Activated CD4-positive, alpha-beta memory T cell treated with anti-CD3 and anti-CD28 coated beads for 36 hours (primary cell): ENCODE measurements at regions of chr2 and their contacts with region 1.

Region 1: GRCh38 chr2:147331790-147332419 is 512.9 kb upstream of the ACVR2A start:
- DNase-seq: peak; percentile 49
- H3K4me3 Mint-ChIP-seq: no peak overlapping the region
- H3K27ac Mint-ChIP-seq: no peak overlapping the region
- H3K4me1 Mint-ChIP-seq: peaks cover 19% of the 10 kb centered on the region
- H3K27me3 Mint-ChIP-seq: no peaks in the 10 kb centered on the region

Region 2: GRCh38 chr2:146734042-146734820 is 597.7 kb before region 1 on chr2:
- CTCF ChIA-PET with region 1: no interaction called
- POLR2A ChIA-PET with region 1: no interaction called
- intact Hi-C with region 1: loop called (anchors 10 kb)
- DNase-seq: no peak
- H3K4me3 Mint-ChIP-seq: no peak overlapping the region
- H3K27ac Mint-ChIP-seq: no peak overlapping the region
- H3K4me1 Mint-ChIP-seq: no peaks in the 10 kb centered on the region
- H3K27me3 Mint-ChIP-seq: no peaks in the 10 kb centered on the region

Region 3: GRCh38 chr2:147082850-147083522 is 248.9 kb before region 1 on chr2:
- CTCF ChIA-PET with region 1: interaction called, 78 read pairs
- POLR2A ChIA-PET with region 1: no interaction called
- intact Hi-C with region 1: loop called (anchors 1 kb)
- DNase-seq: peak; percentile 47
- H3K4me3 Mint-ChIP-seq: no peak overlapping the region
- H3K27ac Mint-ChIP-seq: no peak overlapping the region
- H3K4me1 Mint-ChIP-seq: peaks cover 5% of the 10 kb centered on the region
- H3K27me3 Mint-ChIP-seq: no peaks in the 10 kb centered on the region

Region 4: GRCh38 chr2:147161746-147162145 is 170.2 kb before region 1 on chr2:
- CTCF ChIA-PET with region 1: no interaction called
- POLR2A ChIA-PET with region 1: no interaction called
- intact Hi-C with region 1: no loop called
- DNase-seq: no peak
- H3K4me3 Mint-ChIP-seq: no peak overlapping the region
- H3K27ac Mint-ChIP-seq: no peak overlapping the region
- H3K4me1 Mint-ChIP-seq: no peaks in the 10 kb centered on the region
- H3K27me3 Mint-ChIP-seq: no peaks in the 10 kb centered on the region

Region 5: DNA sequence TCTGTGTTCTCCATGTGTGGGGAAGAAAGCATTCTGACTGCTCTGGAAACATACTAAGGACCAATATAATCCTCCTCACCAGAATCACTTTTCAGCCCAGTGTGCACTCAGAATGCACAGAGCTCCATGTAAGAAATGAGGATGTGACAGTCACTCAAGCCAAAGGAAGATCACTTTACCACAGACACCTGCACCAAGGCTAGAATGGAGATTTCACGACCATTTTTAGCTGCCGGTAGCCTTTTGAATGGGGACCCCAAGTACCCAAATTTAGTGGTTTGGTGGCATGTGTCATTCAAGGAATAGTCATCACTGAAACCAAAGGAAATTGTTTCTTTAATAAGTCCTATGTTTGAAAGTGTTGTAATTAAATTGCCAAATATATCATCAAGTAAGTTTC is 100.3 kb before region 1 on chr2:
- CTCF ChIA-PET with region 1: no interaction called
- POLR2A ChIA-PET with region 1: no interaction called
- intact Hi-C with region 1: loop called (anchors 5 kb)
- DNase-seq: peak; percentile 14
- H3K4me3 Mint-ChIP-seq: no peak overlapping the region
- H3K27ac Mint-ChIP-seq: peak overlapping the region; percentile 1
- H3K4me1 Mint-ChIP-seq: peaks cover 11% of the 10 kb centered on the region
- H3K27me3 Mint-ChIP-seq: no peaks in the 10 kb centered on the region

Region 6: DNA sequence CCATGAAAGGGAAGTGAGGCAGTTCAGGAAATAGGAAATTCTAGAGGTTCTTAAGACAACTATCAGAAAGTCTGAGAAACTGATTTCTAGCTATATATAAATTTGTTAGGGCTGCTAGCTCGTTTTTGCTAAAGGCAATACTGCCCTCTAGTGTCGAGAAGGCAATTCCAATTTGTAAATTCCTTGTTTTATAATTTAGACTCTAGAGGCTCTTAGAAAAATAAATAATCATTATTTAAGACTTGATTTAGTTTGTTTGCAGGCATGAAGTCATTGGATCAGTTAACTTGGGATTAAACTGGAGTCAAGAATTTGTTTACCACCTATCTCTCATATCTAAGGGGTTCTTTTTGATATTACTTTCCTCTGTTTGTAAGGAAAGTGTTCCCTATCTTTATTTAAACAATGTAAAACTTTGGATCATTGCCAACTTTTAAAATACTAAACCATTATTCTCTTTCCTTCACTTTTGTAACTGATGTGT is 579.1 kb after region 1 on chr2:
- CTCF ChIA-PET with region 1: interaction called, 7 read pairs
- POLR2A ChIA-PET with region 1: no interaction called
- intact Hi-C with region 1: loop called (anchors 2 kb)
- DNase-seq: peak; percentile 15
- H3K4me3 Mint-ChIP-seq: no peak overlapping the region
- H3K27ac Mint-ChIP-seq: no peak overlapping the region
- H3K4me1 Mint-ChIP-seq: peaks cover 5% of the 10 kb centered on the region
- H3K27me3 Mint-ChIP-seq: no peaks in the 10 kb centered on the region